ENCODE measurements at regions of chr12 and their contacts with region 1.

Region 1: GRCh38 chr12:96548384-96548783 is 59.0 kb downstream of the CFAP54 start:
- DNase-seq: no peak
- ATAC-seq: peak; percentile 14; the same call in 2 of the 3 replicates
- H3K4me3 ChIP-seq: no peak overlapping the region
- H3K27ac ChIP-seq: no peak overlapping the region
- H3K4me1 ChIP-seq: peaks cover 13% of the 10 kb centered on the region
- H3K27me3 ChIP-seq: no peaks in the 10 kb centered on the region
- CTCF ChIP-seq: no peak
- EP300 ChIP-seq: no peak
- POLR2A ChIP-seq: no peak
- RAD21 ChIP-seq: no peak

Region 2: GRCh38 chr12:96094201-96094600 is 454.2 kb before region 1 on chr12:
- CTCF ChIA-PET with region 1: no interaction called
- POLR2A ChIA-PET with region 1: no interaction called
- RAD21 ChIA-PET with region 1: no interaction called
- SMC1A ChIA-PET with region 1: no interaction called
- in situ Hi-C with region 1: no loop called
- intact Hi-C with region 1: no loop called
- DNase-seq: no peak
- ATAC-seq: no peak
- H3K4me3 ChIP-seq: no peak overlapping the region
- H3K27ac ChIP-seq: no peak overlapping the region
- H3K4me1 ChIP-seq: no peaks in the 10 kb centered on the region
- H3K27me3 ChIP-seq: no peaks in the 10 kb centered on the region; a peak in 1 of 4 replicates
- CTCF ChIP-seq: no peak
- EP300 ChIP-seq: no peak
- POLR2A ChIP-seq: no peak
- RAD21 ChIP-seq: no peak

Region 3: GRCh38 chr12:96521895-96522682 is 26.3 kb before region 1 on chr12:
- CTCF ChIA-PET with region 1: interaction called, 15 read pairs
- POLR2A ChIA-PET with region 1: interaction called, 6 read pairs
- RAD21 ChIA-PET with region 1: interaction called, 15 read pairs
- SMC1A ChIA-PET with region 1: interaction called, 138 read pairs
- in situ Hi-C with region 1: no loop called
- intact Hi-C with region 1: no loop called
- DNase-seq: no peak
- ATAC-seq: peak; percentile 41; the same call in 2 of the 3 replicates
- H3K4me3 ChIP-seq: no peak overlapping the region
- H3K27ac ChIP-seq: no peak overlapping the region
- H3K4me1 ChIP-seq: peaks cover 5% of the 10 kb centered on the region
- H3K27me3 ChIP-seq: no peaks in the 10 kb centered on the region
- CTCF ChIP-seq: peak in 1 of 3 experiments; percentile 41; a peak in 1 of 6 replicates
- EP300 ChIP-seq: no peak
- POLR2A ChIP-seq: no peak
- RAD21 ChIP-seq: peak; percentile 47; the same call in 1 of the 2 replicates

Region 4: DNA sequence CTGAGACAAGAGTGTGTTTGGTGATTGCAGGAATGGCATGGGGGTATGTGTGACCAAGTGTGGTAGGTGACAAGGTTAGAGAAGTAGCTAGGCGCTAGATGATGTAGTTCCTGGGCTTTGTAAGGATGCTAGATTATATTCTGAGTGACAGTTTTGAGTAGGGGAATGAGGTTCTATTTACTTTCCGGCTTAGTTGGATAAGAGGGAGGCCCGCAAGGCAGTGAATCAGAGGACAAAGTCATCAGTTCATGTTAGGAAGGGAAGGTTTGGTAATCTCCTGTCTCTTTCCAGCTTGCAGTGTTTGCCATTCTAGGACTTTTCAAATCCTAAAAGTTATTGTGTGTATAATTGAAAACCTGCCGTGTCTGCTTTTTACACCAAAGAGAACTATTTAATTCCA is 14.0 kb before region 1 on chr12:
- CTCF ChIA-PET with region 1: interaction called, 11 read pairs
- POLR2A ChIA-PET with region 1: interaction called, 7 read pairs
- RAD21 ChIA-PET with region 1: no interaction called
- SMC1A ChIA-PET with region 1: interaction called, 10 read pairs
- in situ Hi-C with region 1: no loop called
- intact Hi-C with region 1: no loop called
- DNase-seq: no peak
- ATAC-seq: no peak
- H3K4me3 ChIP-seq: no peak overlapping the region
- H3K27ac ChIP-seq: no peak overlapping the region
- H3K4me1 ChIP-seq: no peaks in the 10 kb centered on the region
- H3K27me3 ChIP-seq: no peaks in the 10 kb centered on the region
- CTCF ChIP-seq: no peak
- EP300 ChIP-seq: no peak
- POLR2A ChIP-seq: no peak
- RAD21 ChIP-seq: no peak

Region 5: GRCh38 chr12:96571101-96571862 is 22.9 kb after region 1 on chr12:
- CTCF ChIA-PET with region 1: interaction called, 4 read pairs
- POLR2A ChIA-PET with region 1: interaction called, 9 read pairs
- RAD21 ChIA-PET with region 1: interaction called, 42 read pairs
- SMC1A ChIA-PET with region 1: interaction called, 30 read pairs
- in situ Hi-C with region 1: no loop called
- intact Hi-C with region 1: loop called (anchors 1 kb)
- DNase-seq: peak; percentile 93
- ATAC-seq: peak; percentile 87
- H3K4me3 ChIP-seq: peak overlapping the region; percentile 22; the same call in 1 of the 2 replicates
- H3K27ac ChIP-seq: peak overlapping the region; percentile 88
- H3K4me1 ChIP-seq: peaks cover 20% of the 10 kb centered on the region
- H3K27me3 ChIP-seq: no peaks in the 10 kb centered on the region
- CTCF ChIP-seq: no peak
- EP300 ChIP-seq: peak; percentile 74 to 77
- POLR2A ChIP-seq: no peak
- RAD21 ChIP-seq: no peak

Measured in GM12878 (cell line).